ENCODE measurements at regions of chr19 and their contacts with region 1.

Region 1: GRCh38 chr19:31058676-31059396 is 290.4 kb downstream of the TSHZ3 start:
- DNase-seq: no peak
- H3K4me3 ChIP-seq: no peak overlapping the region
- CTCF ChIP-seq: no peak

Region 2: DNA sequence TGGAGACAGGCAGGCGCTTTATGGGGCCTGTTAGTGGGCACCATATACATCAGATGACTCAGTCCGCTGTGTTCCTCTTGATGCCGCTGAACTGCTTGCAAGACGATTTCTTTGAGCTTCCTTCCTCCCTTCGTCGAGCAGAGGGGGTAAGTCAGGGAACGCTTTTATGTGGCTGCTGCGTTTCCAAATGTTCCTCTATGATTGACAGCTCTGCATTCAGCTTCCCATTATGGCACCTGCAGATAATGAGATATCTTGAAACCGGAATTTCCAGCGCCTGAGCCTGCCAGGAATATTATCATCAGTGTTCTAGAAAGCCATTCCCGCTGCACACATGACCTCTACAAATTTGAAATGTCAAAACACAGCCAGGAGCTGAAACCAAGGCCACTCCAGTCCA is 33.4 kb after region 1 on chr19:
- in situ Hi-C with region 1: loop called (anchors 5 kb)
- DNase-seq: no peak
- H3K4me3 ChIP-seq: no peak overlapping the region
- CTCF ChIP-seq: no peak

Region 3: DNA sequence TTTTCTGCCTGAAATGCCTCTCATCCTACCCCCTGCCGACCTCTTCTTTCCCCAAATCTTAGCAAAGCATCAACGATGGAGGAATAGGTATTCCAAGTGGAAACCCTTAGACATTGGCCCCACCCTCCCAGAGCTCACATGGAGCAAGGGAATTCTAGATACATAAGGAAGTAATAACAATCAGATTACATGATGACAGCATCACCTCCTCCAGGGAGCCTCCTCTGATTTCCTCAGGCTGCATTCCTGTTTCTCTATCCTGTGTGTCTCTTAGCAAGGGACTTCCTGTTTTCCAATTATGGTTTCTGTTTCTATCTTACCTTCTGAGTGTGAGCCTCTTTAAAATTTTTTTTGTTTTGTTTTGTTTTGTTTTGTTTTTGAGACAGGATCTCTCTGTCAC is 43.8 kb after region 1 on chr19:
- in situ Hi-C with region 1: no loop called
- DNase-seq: no peak
- H3K4me3 ChIP-seq: no peak overlapping the region
- CTCF ChIP-seq: no peak

Measured in astrocyte of the cerebellum (primary cell).